A673 (cell line): ENCODE measurements at regions of chr9 and their contacts with region 1.

Region 1: GRCh38 chr9:4640027-4640426 is 22.1 kb upstream of the PLPP6 start:
- DNase-seq: peak; percentile 69
- H3K4me3 ChIP-seq: no peak overlapping the region
- H3K27ac ChIP-seq: no peak overlapping the region
- H3K4me1 ChIP-seq: peaks cover 16% of the 10 kb centered on the region
- H3K27me3 ChIP-seq: no peaks in the 10 kb centered on the region
- CTCF ChIP-seq: peak; percentile 74

Region 2: DNA sequence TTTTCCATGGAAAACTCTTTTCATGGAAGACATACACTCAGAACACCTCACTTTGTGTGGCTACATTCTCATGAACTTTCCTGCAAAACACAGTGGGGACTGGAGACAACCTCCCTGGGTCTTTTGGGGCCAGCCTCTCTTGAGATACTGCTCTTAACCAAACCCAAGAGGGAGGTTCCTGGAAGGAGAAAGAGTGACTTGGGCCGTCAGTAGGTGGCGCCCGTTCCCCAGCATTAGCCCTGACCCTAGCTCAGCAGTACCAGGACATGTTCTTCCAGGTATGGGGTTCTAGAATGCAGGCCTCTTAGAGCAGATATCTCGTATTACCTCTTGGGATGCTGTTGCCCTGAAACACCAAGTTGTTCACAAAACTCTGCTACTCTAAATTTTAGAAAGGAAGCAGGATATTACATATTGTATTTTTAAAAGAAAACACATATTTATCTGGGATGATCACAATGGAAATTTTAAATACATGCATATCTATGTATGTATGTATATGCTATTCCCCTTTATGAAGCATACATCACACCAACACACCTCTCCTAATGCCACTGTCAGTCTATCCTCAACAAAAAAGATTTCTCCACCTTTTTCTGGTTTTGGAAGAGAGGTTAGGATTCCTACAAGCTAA is 324.3 kb before region 1 on chr9:
- CTCF ChIA-PET with region 1: no interaction called
- POLR2A ChIA-PET with region 1: interaction called, 6 read pairs
- intact Hi-C with region 1: loop called (anchors 5 kb)
- DNase-seq: peak; percentile 82
- H3K4me3 ChIP-seq: no peak overlapping the region
- H3K27ac ChIP-seq: no peak overlapping the region
- H3K4me1 ChIP-seq: peaks cover 8% of the 10 kb centered on the region
- H3K27me3 ChIP-seq: no peaks in the 10 kb centered on the region
- CTCF ChIP-seq: peak; percentile 94

Region 3: DNA sequence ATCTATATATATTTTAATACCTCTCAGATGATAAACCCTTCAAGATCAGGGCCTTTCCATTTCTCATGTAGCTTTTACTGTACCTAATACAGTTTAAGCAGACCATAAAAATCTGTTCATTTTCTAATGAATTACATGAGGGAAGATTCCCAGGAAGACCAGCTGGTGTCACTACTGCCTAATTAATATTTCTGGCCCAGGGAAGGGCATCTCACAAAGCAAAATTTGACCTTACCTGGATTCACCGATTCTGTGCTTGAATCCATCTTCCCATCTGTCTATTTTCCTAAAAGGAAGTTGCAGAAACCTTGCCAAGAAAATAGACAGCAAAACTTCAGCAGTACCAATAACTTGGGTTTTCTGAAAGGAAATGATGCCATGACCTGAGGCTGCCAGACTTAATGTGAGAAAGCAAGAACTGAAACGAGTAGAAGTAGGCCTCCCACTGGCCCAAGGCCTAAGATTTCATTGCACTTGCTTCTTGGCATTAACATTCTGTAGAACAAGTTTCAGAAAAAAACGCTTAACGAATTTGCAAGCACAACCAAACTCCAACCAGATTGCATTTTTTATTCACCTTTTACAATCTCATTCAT is 257.2 kb before region 1 on chr9:
- CTCF ChIA-PET with region 1: interaction called, 5 read pairs
- POLR2A ChIA-PET with region 1: no interaction called
- intact Hi-C with region 1: loop called (anchors 1 kb)
- DNase-seq: peak; percentile 63
- H3K4me3 ChIP-seq: no peak overlapping the region
- H3K27ac ChIP-seq: no peak overlapping the region
- H3K4me1 ChIP-seq: peaks cover 10% of the 10 kb centered on the region
- H3K27me3 ChIP-seq: no peaks in the 10 kb centered on the region
- CTCF ChIP-seq: peak; percentile 75

Region 4: GRCh38 chr9:4489919-4490704 is 149.9 kb before region 1 on chr9 and contains the start of gene SLC1A1:
- CTCF ChIA-PET with region 1: no interaction called
- POLR2A ChIA-PET with region 1: no interaction called
- intact Hi-C with region 1: loop called (anchors 5 kb)
- DNase-seq: peak; percentile 82
- H3K4me3 ChIP-seq: peak within 1 kb of the TSS; percentile 71
- H3K27ac ChIP-seq: peak within 1 kb of the TSS; percentile 63
- H3K4me1 ChIP-seq: peaks cover 10% of the 10 kb centered on the region
- H3K27me3 ChIP-seq: no peaks in the 10 kb centered on the region
- CTCF ChIP-seq: no peak
- total RNA-seq, gene SLC1A1: 8.5 and 8.7 TPM in 2 replicates

Region 5: DNA sequence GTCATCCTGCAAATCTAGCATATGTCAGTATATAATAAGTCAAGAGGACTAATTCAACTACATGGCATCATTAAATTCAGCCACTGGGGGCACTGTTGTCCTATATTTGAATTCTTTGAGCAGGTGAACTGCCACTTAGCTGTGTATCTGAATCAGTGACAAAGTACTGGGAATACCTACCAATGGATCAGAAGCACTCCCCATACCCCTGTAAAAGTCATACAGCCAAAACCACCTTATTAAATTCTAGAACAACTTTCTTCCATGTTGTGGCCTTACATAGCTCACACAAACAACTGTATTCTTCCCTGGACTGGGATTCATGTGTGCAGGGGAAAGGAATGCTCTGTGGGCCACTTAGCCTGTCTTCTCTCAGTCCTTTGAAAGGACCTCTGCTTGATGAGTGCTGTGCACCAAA is 35.3 kb before region 1 on chr9:
- CTCF ChIA-PET with region 1: interaction called, 11 read pairs
- POLR2A ChIA-PET with region 1: no interaction called
- intact Hi-C with region 1: no loop called
- DNase-seq: peak; percentile 88
- H3K4me3 ChIP-seq: no peak overlapping the region
- H3K27ac ChIP-seq: peak overlapping the region; percentile 67
- H3K4me1 ChIP-seq: no peaks in the 10 kb centered on the region
- H3K27me3 ChIP-seq: no peaks in the 10 kb centered on the region
- CTCF ChIP-seq: peak; percentile 83

Region 6: DNA sequence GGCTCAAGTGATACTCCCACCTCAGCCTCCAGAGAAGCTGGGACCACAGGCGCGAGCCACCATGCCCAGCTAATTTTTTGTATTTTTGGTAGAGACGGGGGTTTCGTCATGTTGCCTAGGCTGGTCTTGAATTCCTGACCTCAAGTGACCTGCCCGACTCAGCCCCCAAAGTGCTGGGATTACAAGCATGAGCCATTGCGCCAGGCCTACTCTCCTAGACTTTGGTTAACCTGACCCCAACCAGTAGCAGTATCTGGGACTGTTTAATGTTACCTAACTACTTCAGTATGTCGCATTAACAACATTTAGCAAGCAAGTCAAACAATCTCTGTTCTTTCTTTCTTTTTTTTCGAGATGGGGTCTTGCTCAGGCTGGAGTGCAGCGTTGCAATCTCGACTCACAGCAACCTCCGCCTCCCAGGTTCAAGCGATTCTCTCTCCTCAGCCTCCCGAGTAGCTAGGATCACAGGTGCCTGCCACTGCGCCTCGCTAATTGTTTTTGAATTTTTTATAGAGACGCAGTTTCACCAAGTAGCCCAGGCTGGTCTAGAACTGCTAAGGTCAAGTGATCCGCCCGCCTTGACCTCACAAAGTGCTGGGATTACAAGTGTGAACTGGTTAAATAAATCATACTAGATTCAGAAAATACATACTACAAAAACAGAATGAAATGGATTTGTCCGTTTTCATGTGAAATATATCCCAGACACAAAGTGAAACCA is 99.0 kb after region 1 on chr9:
- CTCF ChIA-PET with region 1: no interaction called
- POLR2A ChIA-PET with region 1: no interaction called
- intact Hi-C with region 1: no loop called
- DNase-seq: no peak
- H3K4me3 ChIP-seq: peak overlapping the region; percentile 98
- H3K27ac ChIP-seq: peak overlapping the region; percentile 93
- H3K4me1 ChIP-seq: peaks cover 19% of the 10 kb centered on the region
- H3K27me3 ChIP-seq: no peaks in the 10 kb centered on the region
- CTCF ChIP-seq: no peak